Dorsolateral prefrontal cortex (tissue), 120 donors: ENCODE measurements at regions of chr20 and their contacts with region 1.

Region 1: GRCh38 chr20:44532259-44532980 is 10.6 kb upstream of the SERINC3 start:
- DNase-seq: no peak
- H3K4me3 ChIP-seq: peak overlapping the region; percentile 66 to 99 (median 87)
- H3K27ac ChIP-seq: peak overlapping the region in 58 of 59 donors; percentile 33 to 94 (median 84)
- H3K27me3 ChIP-seq: no peaks in the 10 kb centered on the region
- CTCF ChIP-seq: no peak

Region 2: DNA sequence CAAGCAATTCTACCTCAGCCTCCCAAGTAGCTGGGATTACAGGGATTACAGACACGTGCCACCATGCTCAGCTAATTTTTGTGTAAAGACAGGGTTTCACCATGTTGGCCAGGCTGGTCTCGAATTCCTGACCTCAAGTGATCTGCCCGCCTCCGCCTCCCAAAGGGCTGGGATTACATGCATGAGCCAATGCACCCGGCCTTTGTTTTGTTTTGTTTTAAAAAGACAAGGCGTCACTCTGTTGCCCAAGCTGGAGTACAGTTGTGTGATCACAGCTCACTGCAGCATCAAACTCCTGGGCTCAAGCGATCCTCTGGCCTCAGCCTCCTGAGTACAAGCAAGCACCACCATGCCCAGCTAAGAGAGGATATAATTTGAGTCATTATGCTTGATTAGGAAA is 15.9 kb before region 1 on chr20:
- intact Hi-C with region 1: no loop called
- DNase-seq: no peak
- H3K4me3 ChIP-seq: peak overlapping the region in 2 of 59 donors; percentile 11 to 17
- H3K27ac ChIP-seq: peak overlapping the region in 21 of 59 donors; percentile 7 to 55 (median 26)
- H3K27me3 ChIP-seq: no peaks in the 10 kb centered on the region
- CTCF ChIP-seq: no peak

Region 3: GRCh38 chr20:44733341-44734069 is 201.1 kb after region 1 on chr20:
- intact Hi-C with region 1: loop called in 1 of 2 experiments (anchors 5 kb)
- DNase-seq: peak; percentile 38 to 86 (median 82)
- H3K4me3 ChIP-seq: no peak overlapping the region
- H3K27ac ChIP-seq: peak overlapping the region in 53 of 59 donors; percentile 6 to 87 (median 68)
- H3K27me3 ChIP-seq: no peaks in the 10 kb centered on the region
- CTCF ChIP-seq: peak; percentile 77 to 100 (median 96)

Region 4: DNA sequence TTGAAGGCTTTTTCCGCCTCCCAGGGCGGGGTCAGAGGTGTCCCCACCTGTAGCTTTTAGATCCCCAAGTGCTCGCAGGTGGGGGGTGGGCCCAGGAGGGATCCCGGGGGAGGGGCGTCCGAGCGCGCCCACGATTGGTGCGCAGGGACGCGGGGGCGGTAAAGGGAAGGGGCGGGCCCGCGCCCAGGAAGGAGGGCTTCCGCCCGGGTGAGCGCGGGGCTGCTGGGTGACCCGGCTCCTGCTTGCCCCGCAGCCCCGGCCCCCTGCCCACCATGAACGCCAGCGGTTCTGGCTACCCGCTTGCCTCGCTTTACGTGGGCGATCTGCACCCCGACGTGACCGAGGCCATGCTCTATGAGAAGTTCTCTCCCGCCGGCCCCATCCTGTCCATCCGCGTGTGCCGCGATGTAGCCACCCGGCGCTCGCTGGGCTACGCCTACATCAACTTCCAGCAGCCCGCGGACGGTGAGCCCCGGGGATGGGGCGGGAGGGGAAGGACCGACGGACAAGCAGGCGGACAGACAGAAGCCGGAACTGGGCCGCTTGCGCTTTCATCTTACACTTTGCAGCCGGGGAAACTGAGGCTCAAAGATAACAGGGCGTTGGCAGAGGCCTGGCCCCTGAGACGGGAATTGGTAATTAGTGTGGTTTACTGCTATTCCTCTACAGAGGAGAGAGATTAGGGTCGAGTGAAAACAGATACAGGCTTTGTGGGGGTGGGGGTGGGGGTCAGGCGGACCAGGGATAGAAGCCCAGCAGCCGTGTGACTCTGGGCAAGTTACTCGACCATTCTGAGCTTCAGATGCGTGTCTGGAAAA is 377.7 kb after region 1 on chr20 and contains the start of gene PABPC1L:
- intact Hi-C with region 1: no loop called
- DNase-seq: peak in 5 of 10 donors; percentile 5 to 65 (median 19)
- H3K4me3 ChIP-seq: peak within 1 kb of the TSS; percentile 43 to 84 (median 68)
- H3K27ac ChIP-seq: peak within 1 kb of the TSS in 3 of 59 donors; percentile 15 to 53 (median 38)
- H3K27me3 ChIP-seq: no peaks in the 10 kb centered on the region
- CTCF ChIP-seq: no peak
- total RNA-seq, gene PABPC1L: 5.6 to 24.7 (median 14.3) TPM

Region 5: DNA sequence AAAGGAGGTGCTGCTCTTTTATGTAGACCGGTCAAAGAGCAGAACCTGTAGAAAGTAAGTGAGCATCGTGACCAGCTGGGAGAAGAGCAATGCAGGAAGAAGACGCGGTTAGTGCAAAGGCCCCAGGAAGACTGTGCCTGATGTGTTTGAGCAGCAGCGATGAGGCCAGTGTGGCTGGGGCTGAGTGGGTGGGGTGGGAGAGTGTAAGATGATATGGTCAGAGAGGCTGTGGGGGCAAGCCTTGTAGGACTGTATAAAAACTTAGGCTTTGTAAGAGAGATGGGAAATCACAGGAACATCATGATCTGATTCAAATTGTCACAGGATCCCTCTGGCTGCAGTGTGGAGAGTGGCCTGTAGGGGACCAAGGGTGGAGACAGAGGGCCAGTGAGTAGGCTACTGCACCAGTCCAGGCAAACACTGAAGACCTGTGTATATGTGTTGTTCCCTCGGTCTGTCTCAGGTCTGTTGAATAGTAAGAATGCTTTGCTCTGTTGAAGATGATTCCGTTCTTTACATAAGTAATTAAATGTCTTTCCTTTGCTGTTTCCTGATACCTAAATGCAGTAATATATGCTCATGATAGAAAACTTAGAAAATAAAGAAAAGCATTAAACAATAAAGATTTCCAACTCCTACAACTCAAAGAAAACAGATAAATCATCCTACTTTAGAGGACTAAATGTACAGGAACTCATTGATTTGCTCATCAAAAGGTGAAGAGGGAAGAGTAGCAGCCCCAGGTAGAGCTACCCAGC is 913.6 kb after region 1 on chr20:
- intact Hi-C with region 1: no loop called
- DNase-seq: no peak
- H3K4me3 ChIP-seq: no peak overlapping the region
- H3K27ac ChIP-seq: no peak overlapping the region
- H3K27me3 ChIP-seq: no peaks in the 10 kb centered on the region
- CTCF ChIP-seq: peak in 29 of 56 donors; percentile 7 to 46 (median 30)